GM10248 (cell line): ENCODE measurements at regions of chr1 and their contacts with region 1.

Region 1: GRCh38 chr1:26627954-26628353 is 67.9 kb upstream of the ARID1A start:
- DNase-seq: peak; percentile 46
- CTCF ChIP-seq: no peak

Region 2: DNA sequence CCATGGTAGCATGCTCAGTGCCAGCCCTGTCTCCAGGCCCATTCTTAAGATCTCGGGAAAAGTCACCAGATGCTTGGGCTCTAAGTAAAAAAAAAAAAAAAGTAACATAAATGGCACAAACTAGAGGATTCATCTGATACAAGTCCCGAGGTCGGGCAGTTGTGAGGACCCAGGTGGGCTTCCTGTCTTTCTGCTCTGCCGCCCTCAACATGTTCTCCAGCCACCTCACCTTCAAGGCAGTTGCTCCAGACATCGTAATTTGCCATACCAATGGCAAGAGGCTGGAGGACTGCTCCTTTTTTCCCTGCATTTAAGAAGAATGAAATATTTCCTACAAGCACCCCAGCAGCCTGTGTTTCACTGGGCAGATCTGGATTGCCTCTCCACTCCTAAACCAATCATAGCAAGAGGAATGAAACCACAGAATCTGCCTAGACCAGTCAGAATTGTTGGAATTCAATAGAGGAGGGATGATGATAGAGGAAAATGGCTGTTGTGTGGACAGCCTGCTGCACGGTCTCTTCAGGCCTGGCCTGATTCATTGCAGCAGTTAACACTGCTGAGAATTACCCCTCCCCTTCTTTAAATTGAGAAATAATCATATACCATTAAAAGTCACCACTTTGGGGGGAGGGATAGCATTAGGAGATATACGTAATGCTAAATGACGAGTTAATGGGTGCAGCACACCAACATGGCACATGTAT is 150.4 kb before region 1 on chr1:
- CTCF ChIA-PET with region 1: no interaction called
- POLR2A ChIA-PET with region 1: interaction called, 11 read pairs
- DNase-seq: no peak
- CTCF ChIP-seq: no peak